ENCODE measurements at regions of chrX and their contacts with region 1.

Region 1: DNA sequence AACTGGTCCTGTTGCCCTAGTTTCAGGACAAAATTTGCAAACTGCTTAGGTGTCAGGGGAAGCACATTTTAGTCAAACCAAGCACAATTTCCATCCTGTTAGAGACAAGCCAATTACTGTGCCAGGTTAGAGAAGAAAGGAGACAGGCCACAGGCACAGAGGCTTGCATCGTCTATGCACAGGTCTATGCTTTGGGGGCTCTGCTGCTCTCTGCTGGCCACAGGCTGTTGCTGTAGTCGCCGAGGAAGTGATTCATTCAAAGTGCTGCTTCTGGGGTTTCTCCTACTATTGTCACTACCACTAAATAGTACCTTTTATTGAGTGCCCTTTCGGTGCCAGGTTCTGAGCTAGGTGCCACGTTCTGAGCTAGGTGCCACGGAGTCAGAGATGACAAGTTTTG is 45.5 kb downstream of the VGLL1 start:
- DNase-seq: no peak
- ATAC-seq: peak; percentile 71

Region 2: DNA sequence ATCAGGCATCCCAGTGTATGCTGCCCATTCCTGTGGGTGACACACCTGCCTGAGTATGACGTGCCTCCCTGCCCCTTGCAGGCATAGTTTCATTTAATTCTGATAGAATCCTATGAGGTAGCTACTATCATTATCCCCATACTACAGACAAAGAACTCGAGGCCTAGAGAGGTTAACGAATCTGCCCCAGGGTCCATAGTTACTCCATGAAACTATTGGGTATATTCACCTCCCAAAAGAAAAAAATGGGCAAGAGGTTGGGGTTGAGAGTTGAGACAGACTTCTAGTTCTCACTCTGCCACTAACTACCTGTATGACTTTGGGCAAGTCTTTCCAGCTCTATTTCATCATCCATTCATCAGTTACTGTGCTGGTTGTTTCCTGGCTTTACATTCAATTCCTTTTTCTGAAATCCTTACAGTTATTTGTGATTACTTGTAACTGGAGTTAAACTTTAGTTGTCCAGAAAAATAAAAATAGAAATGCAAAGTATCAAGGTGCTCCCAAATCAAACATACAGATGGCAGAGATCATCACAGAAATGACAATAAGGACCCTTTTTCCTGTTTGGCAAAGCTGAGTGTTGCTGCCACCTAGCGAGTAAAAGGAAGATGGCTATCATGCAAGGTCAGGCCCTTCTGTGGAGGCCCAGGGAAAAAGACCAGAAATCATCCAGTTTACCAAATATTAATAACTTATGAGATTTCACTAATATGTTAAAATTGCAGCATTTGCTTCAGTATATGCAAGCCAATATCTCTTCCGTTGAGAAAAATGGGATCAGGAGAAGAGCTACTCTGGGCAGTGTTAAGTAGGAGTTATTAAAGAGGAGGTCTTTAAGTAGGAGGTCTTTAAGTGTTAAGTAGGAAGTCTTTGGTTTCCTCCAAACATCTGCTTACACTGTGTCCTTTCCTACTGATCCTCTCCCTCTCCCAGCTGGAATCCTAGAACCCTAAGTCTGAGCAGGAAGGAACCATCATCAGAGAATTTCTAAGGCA is 309.2 kb before region 1 on chrX:
- intact Hi-C with region 1: loop called (anchors 10 kb)
- DNase-seq: no peak
- ATAC-seq: no peak

Region 3: GRCh38 chrX:136397001-136397400 is 180.6 kb before region 1 on chrX:
- intact Hi-C with region 1: loop called (anchors 10 kb)
- DNase-seq: no peak
- ATAC-seq: no peak

Region 4: DNA sequence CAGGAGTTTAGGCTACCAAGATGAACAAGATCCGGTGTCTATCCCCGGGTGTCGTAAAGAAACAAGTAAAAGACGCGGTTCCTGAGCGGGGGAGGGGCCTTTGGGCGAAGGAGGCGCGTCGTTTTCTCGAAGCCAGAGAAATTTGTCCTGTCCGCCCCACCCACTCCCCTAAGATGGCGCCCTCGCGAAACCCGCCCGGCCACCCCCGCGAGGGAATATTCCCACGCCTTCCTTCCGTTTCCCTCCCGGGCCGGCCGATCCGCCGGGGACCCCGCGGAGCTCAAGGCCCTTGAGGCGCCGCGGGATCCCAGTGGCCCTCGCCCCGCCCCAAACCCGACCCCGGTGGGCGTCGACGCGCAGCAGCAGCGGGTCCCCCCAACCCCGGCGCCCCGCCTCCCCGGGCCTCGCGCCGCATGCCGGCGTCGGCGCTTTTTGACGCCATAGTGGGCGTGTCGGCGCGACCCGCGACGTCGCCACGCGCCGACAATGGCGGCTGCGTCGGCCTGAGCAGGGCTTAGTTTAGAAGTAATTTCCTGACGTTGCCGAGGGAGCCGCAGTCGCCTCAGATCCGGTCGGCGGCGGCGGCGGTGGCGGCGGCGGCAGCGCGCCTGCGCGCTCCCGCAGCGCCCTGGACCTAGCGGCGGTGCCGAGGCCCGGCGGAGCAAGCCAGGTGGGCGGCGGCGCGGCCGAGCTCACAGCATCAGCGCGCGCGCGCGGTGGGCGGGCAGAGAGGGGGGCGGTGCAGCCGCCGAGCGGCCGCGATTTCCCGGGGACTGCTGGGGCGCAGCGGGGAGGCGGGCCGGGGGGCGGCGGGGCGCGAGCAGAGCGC is 80.6 kb before region 1 on chrX and contains the start of gene HTATSF1:
- intact Hi-C with region 1: no loop called
- DNase-seq: peak; percentile 90
- ATAC-seq: peak; percentile 93
- total RNA-seq, gene HTATSF1: 57.3 TPM

Region 5: GRCh38 chrX:136525738-136526606 is 51.6 kb before region 1 on chrX:
- intact Hi-C with region 1: loop called (anchors 5 kb)
- DNase-seq: peak; percentile 67
- ATAC-seq: peak; percentile 96

Measured in Right ventricle myocardium inferior (tissue), 1 donor.